Heart left ventricle (tissue), 16 donors: ENCODE measurements at regions of chr2 and their contacts with region 1.

Region 1: DNA sequence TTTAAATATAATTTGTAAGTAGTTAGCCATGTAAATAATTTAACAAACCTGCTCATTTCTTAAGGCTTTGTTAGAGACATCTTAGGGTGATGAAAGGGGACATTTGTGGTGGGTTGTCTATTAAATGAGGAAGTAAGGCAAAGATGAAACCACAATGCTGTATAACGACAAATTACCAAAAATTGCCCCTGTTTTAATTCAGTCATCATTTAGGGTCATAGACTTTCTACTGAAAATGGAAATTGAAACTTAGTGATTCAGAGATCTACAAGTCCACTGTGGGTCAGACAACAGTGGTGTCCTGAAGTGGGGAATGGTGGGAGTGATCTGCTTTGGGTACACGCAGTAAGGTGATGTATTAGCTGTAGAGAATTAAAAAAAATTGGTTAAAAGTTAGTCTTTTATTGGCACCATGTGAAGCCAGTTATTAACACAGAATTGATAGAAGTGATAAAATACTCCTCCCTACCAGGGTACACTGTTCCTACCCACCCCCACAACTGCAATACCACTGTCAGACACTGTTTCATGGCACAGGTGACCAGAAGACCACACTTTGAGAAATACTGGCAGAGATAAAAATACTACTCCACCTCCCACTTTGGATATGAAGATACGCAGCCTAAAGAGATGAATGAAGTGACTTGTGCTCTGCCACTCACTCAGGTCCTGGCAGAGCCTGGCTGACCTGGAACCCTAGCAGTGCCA is 13.4 kb downstream of the CERS6 start:
- DNase-seq: no peak
- ATAC-seq: no peak
- H3K4me3 ChIP-seq: no peak overlapping the region
- H3K27ac ChIP-seq: no peak overlapping the region
- H3K4me1 ChIP-seq: peaks cover 0 to 64% (median 27%) of the 10 kb centered on the region in 12 donors
- H3K27me3 ChIP-seq: no peaks in the 10 kb centered on the region
- CTCF ChIP-seq: no peak
- POLR2A ChIP-seq: no peak

Region 2: DNA sequence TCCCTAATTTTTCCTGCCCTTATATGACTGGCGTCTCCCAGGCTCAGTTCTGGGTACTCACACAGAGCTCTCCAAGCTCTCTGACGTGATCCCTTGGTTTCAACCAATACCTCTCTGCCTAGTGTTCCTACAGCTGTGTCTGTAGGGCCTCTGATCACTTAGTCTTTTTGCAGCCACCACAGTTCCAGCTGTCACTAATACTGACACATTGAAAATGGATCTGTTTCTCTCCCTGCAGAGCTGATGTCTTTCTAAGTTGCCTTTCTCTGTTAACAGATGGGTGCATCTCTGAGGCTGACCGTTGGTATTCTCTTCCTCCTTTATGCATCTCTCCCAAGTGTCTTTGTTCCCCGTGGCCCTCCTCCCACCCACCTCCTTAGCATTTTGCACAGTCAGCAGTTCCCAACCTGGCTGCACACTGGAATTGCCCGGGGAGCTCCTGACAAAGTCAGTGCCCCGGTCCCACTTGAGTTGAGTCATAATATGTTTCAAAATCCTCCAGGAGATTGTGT is 49.2 kb after region 1 on chr2:
- intact Hi-C with region 1: loop called in 2 of 10 experiments (anchors 5 to 10 kb)
- DNase-seq: peak in 3 of 5 donors; percentile 29 to 51 (median 39)
- ATAC-seq: peak; percentile 80 to 94 (median 90)
- H3K4me3 ChIP-seq: peak overlapping the region in 1 of 12 donors; percentile 9
- H3K27ac ChIP-seq: peak overlapping the region in 11 of 12 donors; percentile 21 to 78 (median 52)
- H3K4me1 ChIP-seq: peaks cover 0 to 66% (median 37%) of the 10 kb centered on the region in 12 donors
- H3K27me3 ChIP-seq: no peaks in the 10 kb centered on the region
- CTCF ChIP-seq: no peak
- POLR2A ChIP-seq: no peak